Activated naive CD4-positive, alpha-beta T cell treated with anti-CD3 and anti-CD28 coated beads, Interleukin-2, amount 10 ng/mL, durations not matched to agents 7 days and 5 days (primary cell): ENCODE measurements at regions of chr9 and their contacts with region 1.

Region 1: DNA sequence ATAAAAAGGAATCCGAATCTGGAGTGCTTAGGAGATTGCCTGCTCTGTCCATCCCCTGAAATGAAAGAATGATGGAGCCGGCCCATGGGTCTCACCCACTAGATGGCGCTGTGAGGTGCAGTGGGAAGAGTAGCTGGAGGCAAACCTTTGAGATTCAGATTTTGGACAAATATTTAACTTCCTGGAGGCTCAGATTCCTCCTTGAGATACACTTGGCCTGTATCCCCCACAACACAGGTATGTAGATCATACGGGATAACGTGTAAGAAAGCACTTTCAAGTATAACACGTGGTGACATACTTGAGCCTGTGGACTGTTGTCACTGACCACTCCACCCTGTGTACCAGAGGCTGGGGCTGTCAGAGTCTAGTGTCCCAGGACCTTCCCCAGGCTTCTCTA is 32.3 kb downstream of the TRMO start:
- DNase-seq: peak; percentile 81
- H3K4me3 Mint-ChIP-seq: no peak overlapping the region
- H3K27ac Mint-ChIP-seq: no peak overlapping the region
- H3K4me1 Mint-ChIP-seq: peaks cover 10% of the 10 kb centered on the region
- H3K27me3 Mint-ChIP-seq: peaks cover 5% of the 10 kb centered on the region

Region 2: GRCh38 chr9:97873877-97874276 is 16.2 kb before region 1 on chr9:
- CTCF ChIA-PET with region 1: interaction called, 10 read pairs
- DNase-seq: no peak
- H3K4me3 Mint-ChIP-seq: no peak overlapping the region
- H3K27ac Mint-ChIP-seq: no peak overlapping the region
- H3K4me1 Mint-ChIP-seq: no peaks in the 10 kb centered on the region
- H3K27me3 Mint-ChIP-seq: peaks cover 28% of the 10 kb centered on the region

Region 3: GRCh38 chr9:97900738-97901565 is 10.9 kb after region 1 on chr9:
- CTCF ChIA-PET with region 1: interaction called, 134 read pairs
- DNase-seq: peak; percentile 36
- H3K4me3 Mint-ChIP-seq: no peak overlapping the region
- H3K27ac Mint-ChIP-seq: peak overlapping the region; percentile 86
- H3K4me1 Mint-ChIP-seq: peaks cover 62% of the 10 kb centered on the region
- H3K27me3 Mint-ChIP-seq: no peaks in the 10 kb centered on the region

Region 4: DNA sequence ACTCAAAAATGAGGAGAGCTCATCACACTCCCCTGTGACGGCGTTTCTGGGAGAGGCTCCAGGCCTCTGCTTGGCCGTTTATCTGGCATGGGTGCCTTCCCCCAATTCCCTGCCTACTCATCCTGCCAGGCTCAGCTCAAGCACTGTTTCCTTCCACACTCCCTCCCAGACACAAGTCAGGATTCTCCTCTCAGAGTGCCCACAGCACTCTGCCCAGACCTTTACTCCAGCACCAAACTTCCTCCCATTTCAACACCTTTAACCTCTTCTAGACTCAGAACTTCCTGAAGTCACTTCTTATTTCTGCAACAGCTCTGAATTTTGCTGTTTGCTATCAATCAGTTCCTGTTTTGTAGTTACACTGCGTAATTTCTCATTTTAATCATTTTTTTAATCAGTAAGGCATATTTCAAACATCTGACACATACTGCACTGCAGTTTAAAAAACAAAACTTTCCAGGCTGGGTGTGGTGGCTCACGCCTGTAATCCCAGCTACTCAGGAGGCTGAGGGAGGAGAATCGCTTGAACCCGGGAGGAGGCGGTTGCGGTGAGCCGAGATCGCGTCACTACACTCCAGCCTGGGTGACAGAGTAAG is 16.3 kb after region 1 on chr9:
- CTCF ChIA-PET with region 1: interaction called, 134 read pairs
- DNase-seq: peak; percentile 64
- H3K4me3 Mint-ChIP-seq: peak overlapping the region; percentile 73
- H3K27ac Mint-ChIP-seq: peak overlapping the region; percentile 99
- H3K4me1 Mint-ChIP-seq: peaks cover 91% of the 10 kb centered on the region
- H3K27me3 Mint-ChIP-seq: no peaks in the 10 kb centered on the region

Region 5: GRCh38 chr9:97966493-97966892 is 76.5 kb after region 1 on chr9:
- CTCF ChIA-PET with region 1: no interaction called
- DNase-seq: no peak
- H3K4me3 Mint-ChIP-seq: no peak overlapping the region
- H3K27ac Mint-ChIP-seq: no peak overlapping the region
- H3K4me1 Mint-ChIP-seq: peaks cover 7% of the 10 kb centered on the region
- H3K27me3 Mint-ChIP-seq: peaks cover 10% of the 10 kb centered on the region